ENCODE measurements at regions of chr3 and their contacts with region 1.

Region 1: DNA sequence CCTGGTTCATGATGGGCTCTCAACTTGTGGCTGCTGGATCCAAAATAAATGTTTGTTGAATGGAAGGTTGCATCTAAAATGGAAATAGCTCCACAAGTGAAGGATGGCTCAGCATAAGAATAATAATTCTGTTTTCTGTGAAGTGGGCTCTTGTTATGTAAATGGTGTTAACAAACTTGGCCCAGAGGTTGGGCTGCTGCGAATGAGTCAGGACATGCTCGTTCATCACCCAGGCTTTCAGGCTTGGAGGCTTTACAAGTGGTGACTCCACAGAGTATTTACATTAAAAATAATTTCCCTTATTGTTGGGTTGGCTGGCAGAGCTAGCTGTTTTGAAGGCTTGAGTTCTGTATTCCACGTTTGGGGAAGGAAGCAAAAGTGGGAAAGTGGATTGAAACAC is 60.5 kb downstream of the ITGB5 start:
- DNase-seq: no peak
- ATAC-seq: peak; percentile 51 to 62; a peak in 4 of 6 replicates
- H3K4me3 ChIP-seq: no peak overlapping the region
- H3K27ac ChIP-seq: peak overlapping the region; percentile 52 to 81
- H3K4me1 ChIP-seq: peaks cover 54% of the 10 kb centered on the region
- CTCF ChIP-seq: no peak
- EP300 ChIP-seq: no peak
- POLR2A ChIP-seq: no peak
- RAD21 ChIP-seq: no peak

Region 2: DNA sequence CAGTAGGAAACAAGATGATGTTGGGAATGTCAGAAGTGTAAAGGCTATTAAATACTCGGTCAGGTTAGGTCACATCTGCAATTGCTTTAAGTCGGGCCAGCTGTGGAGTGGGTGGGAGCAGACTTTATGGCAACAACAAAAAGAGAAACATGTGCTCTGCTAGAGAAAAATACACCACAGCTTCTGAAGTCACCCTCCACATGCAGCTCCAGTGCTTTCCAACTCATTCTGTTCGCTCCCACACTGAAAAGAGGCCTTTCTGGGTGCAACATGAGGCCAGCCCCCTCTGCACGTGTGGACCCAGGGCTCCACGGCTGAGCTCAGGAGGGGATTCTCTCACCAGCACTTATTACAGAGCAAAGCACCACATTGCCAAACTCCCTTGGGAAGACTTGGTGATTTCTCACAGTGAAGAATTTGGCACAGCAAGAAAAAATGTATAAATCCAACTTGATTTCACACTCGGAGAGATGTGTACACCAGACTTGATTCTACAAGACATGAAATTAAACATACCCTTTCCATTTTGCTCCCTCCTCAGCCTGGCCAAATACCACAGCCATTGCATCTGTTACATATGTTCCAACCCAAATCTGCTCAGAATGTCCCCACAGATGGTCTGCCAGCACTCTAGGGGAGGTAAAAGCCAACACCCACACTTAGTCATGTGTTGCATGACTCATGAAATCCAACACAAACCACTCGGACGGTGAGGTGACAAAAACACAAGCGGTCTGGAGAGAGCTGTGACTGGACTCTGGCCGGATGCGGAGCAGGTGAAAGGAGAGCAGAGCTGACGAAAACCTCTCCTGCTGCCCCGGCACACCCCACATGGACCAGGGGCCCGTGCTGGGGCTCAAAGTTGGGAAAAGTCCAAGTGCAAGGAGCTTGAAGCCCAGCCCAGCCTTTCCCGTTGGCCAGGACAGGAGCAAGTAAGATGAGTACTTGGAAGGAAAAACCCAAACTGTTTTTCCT is 14.1 kb before region 1 on chr3:
- CTCF ChIA-PET with region 1: interaction called, 21 read pairs
- POLR2A ChIA-PET with region 1: no interaction called
- DNase-seq: peak; percentile 91 to 94
- ATAC-seq: peak; percentile 80 to 85
- H3K4me3 ChIP-seq: peak overlapping the region; percentile 27; the same call in 2 of the 3 replicates
- H3K27ac ChIP-seq: peak overlapping the region; percentile 86 to 90
- H3K4me1 ChIP-seq: peaks cover 78% of the 10 kb centered on the region
- CTCF ChIP-seq: no peak
- EP300 ChIP-seq: peak; percentile 48 to 73; a peak in 2 of 5 replicates
- POLR2A ChIP-seq: no peak
- RAD21 ChIP-seq: peak in 1 of 2 experiments; percentile 43; a peak in 2 of 5 replicates

Measured in A549 (cell line).